Sigmoid colon (tissue), 7 donors: ENCODE measurements at regions of chr9 and their contacts with region 1.

Region 1: DNA sequence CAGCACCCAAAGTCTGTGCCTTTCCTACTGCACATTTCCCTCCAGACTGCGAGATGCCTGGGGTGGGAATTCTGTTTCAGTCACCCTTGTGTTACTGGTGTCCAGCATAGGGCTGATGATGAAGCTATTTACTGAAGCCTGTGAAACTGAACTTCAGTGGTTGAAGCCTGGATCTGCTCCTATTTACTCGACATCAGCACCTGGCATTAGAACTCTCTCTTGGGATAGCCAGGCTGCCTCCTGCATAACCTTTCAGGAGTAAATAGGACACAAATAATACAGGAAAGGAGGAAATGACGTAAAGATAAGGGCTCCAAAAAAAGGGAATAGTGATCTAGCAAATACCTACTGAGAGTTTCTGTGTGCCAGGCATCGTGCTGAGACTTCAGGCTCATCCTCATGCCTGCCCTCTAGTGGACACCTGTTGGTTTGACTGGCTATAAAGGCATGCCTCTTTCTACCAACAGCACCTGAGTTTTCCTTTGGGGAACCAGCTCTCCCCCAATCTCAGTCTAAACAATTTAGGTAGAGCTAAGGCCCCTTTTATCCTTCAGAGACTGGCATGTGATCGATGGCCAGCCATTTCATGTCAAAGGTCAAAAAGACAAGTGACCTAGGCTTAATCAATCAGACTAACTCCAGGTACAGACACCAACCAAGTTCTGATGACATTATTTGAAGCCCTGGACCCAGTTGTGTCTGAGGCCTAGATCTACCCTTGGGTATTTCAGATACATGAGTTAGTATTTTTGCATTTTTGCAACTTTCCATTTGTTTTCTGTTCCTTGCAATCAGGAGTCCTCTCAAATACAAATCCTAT is 192.1 kb upstream of the TRIM32 start:
- DNase-seq: no peak
- H3K4me3 ChIP-seq: no peak overlapping the region
- H3K27ac ChIP-seq: no peak overlapping the region
- H3K4me1 ChIP-seq: peaks cover 0 to 7% (median 0%) of the 10 kb centered on the region in 4 donors
- H3K27me3 ChIP-seq: no peaks in the 10 kb centered on the region
- CTCF ChIP-seq: peak; percentile 8 to 48 (median 44)
- EP300 ChIP-seq: no peak
- POLR2A ChIP-seq: no peak

Region 2: GRCh38 chr9:115063058-115063845 is 1431.8 kb before region 1 on chr9:
- intact Hi-C with region 1: no loop called
- DNase-seq: no peak
- H3K4me3 ChIP-seq: no peak overlapping the region
- H3K27ac ChIP-seq: peak overlapping the region; percentile 84 to 91 (median 86)
- H3K4me1 ChIP-seq: peaks cover 0 to 94% (median 74%) of the 10 kb centered on the region in 4 donors
- H3K27me3 ChIP-seq: no peaks in the 10 kb centered on the region
- CTCF ChIP-seq: no peak
- EP300 ChIP-seq: peak in 3 of 4 donors; percentile 31 to 60 (median 58)
- POLR2A ChIP-seq: no peak

Region 3: DNA sequence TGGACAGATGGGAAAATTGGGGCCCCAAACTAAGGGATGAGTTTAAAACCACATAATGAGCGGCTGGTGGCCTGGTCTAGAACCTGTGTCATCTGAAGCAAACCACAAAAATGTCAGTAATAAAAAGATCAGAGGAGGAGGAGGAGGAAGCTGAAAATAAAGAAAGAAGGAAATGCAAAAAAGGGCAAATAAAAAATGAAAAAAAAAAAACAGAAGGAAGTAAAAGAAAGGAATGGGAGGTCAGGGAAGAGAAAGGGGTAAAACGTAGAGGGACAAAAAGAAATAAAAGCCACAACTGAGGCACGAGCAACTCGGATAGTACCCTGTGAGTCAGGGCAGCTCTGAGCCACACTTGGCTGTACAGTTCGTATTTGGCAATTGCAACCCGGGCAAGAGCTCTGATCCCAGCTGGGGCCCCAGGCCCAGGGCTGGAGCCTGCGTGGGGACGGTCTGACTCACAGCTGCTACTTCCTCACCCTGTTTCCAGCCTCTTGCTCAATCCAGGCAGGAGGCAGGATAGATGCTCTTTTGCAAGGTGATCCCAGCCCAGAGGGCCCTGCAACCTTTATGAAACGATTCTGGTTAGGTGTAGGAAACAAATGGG is 54.1 kb after region 1 on chr9:
- intact Hi-C with region 1: loop called (anchors 10 kb)
- DNase-seq: peak; percentile 89
- H3K4me3 ChIP-seq: no peak overlapping the region
- H3K27ac ChIP-seq: peak overlapping the region in 2 of 4 donors; percentile 7 to 22
- H3K4me1 ChIP-seq: no peaks in the 10 kb centered on the region
- H3K27me3 ChIP-seq: no peaks in the 10 kb centered on the region
- CTCF ChIP-seq: no peak
- EP300 ChIP-seq: no peak
- POLR2A ChIP-seq: no peak

Region 4: GRCh38 chr9:116594547-116594946 is 99.5 kb after region 1 on chr9:
- intact Hi-C with region 1: no loop called
- DNase-seq: no peak
- H3K4me3 ChIP-seq: no peak overlapping the region
- H3K27ac ChIP-seq: no peak overlapping the region
- H3K4me1 ChIP-seq: no peaks in the 10 kb centered on the region
- H3K27me3 ChIP-seq: no peaks in the 10 kb centered on the region
- CTCF ChIP-seq: no peak
- EP300 ChIP-seq: no peak
- POLR2A ChIP-seq: no peak